Motor neuron (in vitro differentiated cells): ENCODE measurements at regions of chrX and their contacts with region 1.

Region 1: GRCh38 chrX:132226169-132226568 is 6.9 kb upstream of the RAP2C start:
- ATAC-seq: no peak
- H3K4me3 ChIP-seq: no peak overlapping the region
- H3K27ac ChIP-seq: no peak overlapping the region
- H3K4me1 ChIP-seq: no peaks in the 10 kb centered on the region

Region 2: GRCh38 chrX:132622130-132622529 is 396.0 kb after region 1 on chrX:
- in situ Hi-C with region 1: loop called in 2 of 9 experiments (anchors 10 to 25 kb)
- ATAC-seq: peak in 4 of 8 experiments; percentile 36 to 85 (median 68)
- H3K4me3 ChIP-seq: no peak overlapping the region
- H3K27ac ChIP-seq: no peak overlapping the region
- H3K4me1 ChIP-seq: no peaks in the 10 kb centered on the region